ENCODE measurements at regions of chr14 and their contacts with region 1.

Region 1: GRCh38 chr14:51860164-51860824 is at the start of gene GNG2:
- DNase-seq: peak; percentile 83 to 92 (median 87)
- H3K4me3 ChIP-seq: peak within 1 kb of the TSS; percentile 49 to 77
- H3K4me3 Mint-ChIP-seq: peak within 1 kb of the TSS; percentile 91 to 98 (median 96)
- H3K27ac ChIP-seq: peak within 1 kb of the TSS; percentile 84
- H3K27ac Mint-ChIP-seq: peak within 1 kb of the TSS; percentile 96 to 100 (median 99)
- H3K4me1 ChIP-seq: peaks cover 57% of the 10 kb centered on the region
- H3K4me1 Mint-ChIP-seq: peaks cover 47 to 84% (median 63%) of the 10 kb centered on the region in 4 donors
- H3K27me3 ChIP-seq: no peaks in the 10 kb centered on the region
- H3K27me3 Mint-ChIP-seq: no peaks in the 10 kb centered on the region
- total RNA-seq, gene GNG2: 81.3 to 84.8 TPM

Region 2: GRCh38 chr14:50311975-50312733 is 1548.1 kb before region 1 on chr14 and contains the starts of genes DMAC2L and L2HGDH:
- CTCF ChIA-PET with region 1: no interaction called
- POLR2A ChIA-PET with region 1: no interaction called
- intact Hi-C with region 1: loop called (anchors 5 kb)
- DNase-seq: peak; percentile 86 to 91 (median 89)
- H3K4me3 ChIP-seq: peak within 1 kb of the TSS; percentile 77 to 92
- H3K4me3 Mint-ChIP-seq: peak within 1 kb of the TSS; percentile 91 to 98 (median 97)
- H3K27ac ChIP-seq: peak within 1 kb of the TSS; percentile 76
- H3K27ac Mint-ChIP-seq: peak within 1 kb of the TSS; percentile 92 to 99 (median 99)
- H3K4me1 ChIP-seq: peaks cover 30% of the 10 kb centered on the region
- H3K4me1 Mint-ChIP-seq: peaks cover 30 to 47% (median 34%) of the 10 kb centered on the region in 4 donors
- H3K27me3 ChIP-seq: no peaks in the 10 kb centered on the region
- H3K27me3 Mint-ChIP-seq: no peaks in the 10 kb centered on the region
- total RNA-seq, gene DMAC2L: 15.9 to 19.5 TPM
- total RNA-seq, gene L2HGDH: 4.9 to 5.5 TPM

Region 3: GRCh38 chr14:51759950-51760349 is 100.3 kb before region 1 on chr14:
- CTCF ChIA-PET with region 1: no interaction called
- POLR2A ChIA-PET with region 1: no interaction called
- intact Hi-C with region 1: no loop called
- DNase-seq: no peak
- H3K4me3 ChIP-seq: no peak overlapping the region
- H3K4me3 Mint-ChIP-seq: no peak overlapping the region
- H3K27ac ChIP-seq: no peak overlapping the region
- H3K27ac Mint-ChIP-seq: no peak overlapping the region
- H3K4me1 ChIP-seq: no peaks in the 10 kb centered on the region
- H3K4me1 Mint-ChIP-seq: peaks cover 5 to 7% (median 6%) of the 10 kb centered on the region in 4 donors
- H3K27me3 ChIP-seq: no peaks in the 10 kb centered on the region
- H3K27me3 Mint-ChIP-seq: peaks cover 4 to 13% of the 10 kb centered on the region in 2 donors

Region 4: DNA sequence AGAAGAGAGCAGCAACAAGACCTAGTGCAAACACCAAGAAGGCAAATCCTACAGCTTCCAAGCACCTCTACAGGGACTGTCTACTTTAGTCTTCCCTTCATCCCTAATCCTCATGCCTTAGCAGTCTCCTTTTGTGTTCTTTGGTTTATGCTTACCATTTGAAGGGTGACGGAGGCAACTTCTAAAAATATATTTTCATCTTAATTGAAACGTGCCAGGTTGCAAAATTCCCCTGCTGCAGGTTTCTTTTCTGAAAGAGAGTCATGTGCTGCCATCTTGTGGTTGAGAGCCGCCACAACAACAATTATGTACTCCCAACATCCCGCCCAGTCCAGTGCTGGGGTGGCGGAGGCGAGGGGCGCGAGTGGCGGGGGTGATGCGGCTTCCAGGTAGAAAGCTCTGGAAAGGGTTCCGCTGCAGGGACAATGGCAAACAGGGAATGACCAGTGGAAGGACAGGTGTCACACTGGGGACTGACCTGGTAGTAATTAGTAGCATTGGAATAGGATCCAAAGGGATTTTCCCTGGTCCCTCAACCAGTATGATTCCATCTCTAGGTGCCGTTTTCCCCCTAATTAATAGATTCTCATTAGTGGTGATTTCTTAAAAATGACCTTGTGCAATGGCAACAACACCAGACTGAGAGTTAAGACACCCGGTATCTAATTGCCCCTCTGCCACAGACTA is 80.1 kb before region 1 on chr14:
- CTCF ChIA-PET with region 1: interaction called, 7 read pairs
- POLR2A ChIA-PET with region 1: no interaction called
- intact Hi-C with region 1: loop called (anchors 5 kb)
- DNase-seq: peak; percentile 64 to 70 (median 69)
- H3K4me3 ChIP-seq: no peak overlapping the region
- H3K4me3 Mint-ChIP-seq: peak overlapping the region in 1 of 8 donors; percentile 71
- H3K27ac ChIP-seq: no peak overlapping the region
- H3K27ac Mint-ChIP-seq: peak overlapping the region in 2 of 7 donors; percentile 2 to 75
- H3K4me1 ChIP-seq: peaks cover 8% of the 10 kb centered on the region
- H3K4me1 Mint-ChIP-seq: peaks cover 12 to 16% (median 13%) of the 10 kb centered on the region in 4 donors
- H3K27me3 ChIP-seq: no peaks in the 10 kb centered on the region
- H3K27me3 Mint-ChIP-seq: peaks cover 18 to 21% of the 10 kb centered on the region in 2 donors

Region 5: GRCh38 chr14:51846631-51847488 is 13.4 kb before region 1 on chr14:
- CTCF ChIA-PET with region 1: interaction called, 25 read pairs
- POLR2A ChIA-PET with region 1: interaction called, 285 read pairs
- intact Hi-C with region 1: loop called (anchors 1 kb)
- DNase-seq: peak; percentile 92 to 99 (median 96)
- H3K4me3 ChIP-seq: peak overlapping the region; percentile 14 to 72
- H3K4me3 Mint-ChIP-seq: peak overlapping the region; percentile 85 to 98 (median 91)
- H3K27ac ChIP-seq: peak overlapping the region; percentile 92
- H3K27ac Mint-ChIP-seq: peak overlapping the region; percentile 98 to 100 (median 99)
- H3K4me1 ChIP-seq: peaks cover 51% of the 10 kb centered on the region
- H3K4me1 Mint-ChIP-seq: peaks cover 46 to 73% (median 52%) of the 10 kb centered on the region in 4 donors
- H3K27me3 ChIP-seq: no peaks in the 10 kb centered on the region
- H3K27me3 Mint-ChIP-seq: peaks cover 2% of the 10 kb centered on the region in 2 donors

Region 6: GRCh38 chr14:51879170-51879569 is 18.9 kb after region 1 on chr14:
- CTCF ChIA-PET with region 1: interaction called, 4 read pairs
- POLR2A ChIA-PET with region 1: interaction called, 53 read pairs
- intact Hi-C with region 1: loop called (anchors 2 kb)
- DNase-seq: no peak
- H3K4me3 ChIP-seq: no peak overlapping the region
- H3K4me3 Mint-ChIP-seq: peak overlapping the region in 2 of 8 donors; percentile 1 to 22
- H3K27ac ChIP-seq: no peak overlapping the region
- H3K27ac Mint-ChIP-seq: peak overlapping the region; percentile 2 to 80 (median 54)
- H3K4me1 ChIP-seq: peaks cover 89% of the 10 kb centered on the region
- H3K4me1 Mint-ChIP-seq: peaks cover 54 to 82% (median 70%) of the 10 kb centered on the region in 4 donors
- H3K27me3 ChIP-seq: no peaks in the 10 kb centered on the region
- H3K27me3 Mint-ChIP-seq: no peaks in the 10 kb centered on the region

Region 7: DNA sequence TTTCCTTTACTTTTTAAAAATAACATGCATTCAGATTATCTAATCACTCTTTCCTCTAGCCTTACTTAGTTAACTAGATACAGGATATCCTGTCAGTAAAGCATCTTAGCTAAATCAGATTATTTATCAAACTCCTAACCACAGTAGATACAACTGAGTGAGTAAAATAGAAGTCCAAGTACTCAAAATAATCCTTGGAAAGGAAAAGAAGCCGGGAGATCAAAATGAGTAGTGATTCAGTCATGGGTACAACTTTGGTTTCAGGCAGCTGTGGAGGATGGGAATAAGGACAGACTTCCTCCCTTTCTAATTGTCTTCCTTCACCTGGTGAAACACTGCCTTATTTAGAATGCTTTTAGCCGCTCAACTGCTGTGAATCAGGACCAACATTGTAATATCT is 29.6 kb after region 1 on chr14:
- CTCF ChIA-PET with region 1: interaction called, 7 read pairs
- POLR2A ChIA-PET with region 1: interaction called, 53 read pairs
- intact Hi-C with region 1: no loop called
- DNase-seq: no peak
- H3K4me3 ChIP-seq: no peak overlapping the region
- H3K4me3 Mint-ChIP-seq: peak overlapping the region in 7 of 8 donors; percentile 22 to 80 (median 65)
- H3K27ac ChIP-seq: peak overlapping the region; percentile 18
- H3K27ac Mint-ChIP-seq: peak overlapping the region; percentile 13 to 91 (median 71)
- H3K4me1 ChIP-seq: peaks cover 87% of the 10 kb centered on the region
- H3K4me1 Mint-ChIP-seq: peaks cover 48 to 93% (median 72%) of the 10 kb centered on the region in 4 donors
- H3K27me3 ChIP-seq: no peaks in the 10 kb centered on the region
- H3K27me3 Mint-ChIP-seq: no peaks in the 10 kb centered on the region

Region 8: DNA sequence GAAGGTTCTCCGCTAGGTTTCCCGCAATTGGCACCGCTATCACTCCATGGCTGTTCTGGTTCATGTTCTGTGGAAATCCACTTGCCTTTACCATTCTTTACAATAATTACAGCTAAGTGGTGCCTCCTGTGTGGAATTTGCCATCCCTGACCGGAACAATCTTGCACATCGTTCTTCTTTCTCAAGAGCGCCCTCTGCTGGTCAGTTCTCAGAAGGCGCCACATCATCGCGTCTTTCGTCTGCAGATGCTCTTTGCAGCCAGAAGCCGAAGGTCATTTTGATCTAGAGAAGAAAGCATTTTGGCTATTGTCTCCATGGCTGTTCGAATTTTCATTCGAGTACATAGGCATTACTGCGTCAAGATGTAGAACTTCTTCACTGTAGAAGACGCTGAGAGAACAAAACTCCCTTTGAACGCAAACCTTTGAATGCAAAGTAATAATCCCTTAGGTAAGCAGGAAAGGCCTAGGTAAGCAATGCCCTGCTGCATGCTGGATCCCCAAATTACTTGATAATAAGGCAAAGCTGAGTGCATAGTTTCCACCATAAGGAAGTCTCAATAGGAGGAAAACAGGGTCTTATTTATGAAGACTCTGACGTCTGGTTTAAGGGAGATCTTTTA is 118.9 kb after region 1 on chr14:
- CTCF ChIA-PET with region 1: interaction called, 40 read pairs
- POLR2A ChIA-PET with region 1: interaction called, 8 read pairs
- intact Hi-C with region 1: loop called (anchors 1 kb)
- DNase-seq: peak; percentile 71 to 76 (median 73)
- H3K4me3 ChIP-seq: no peak overlapping the region
- H3K4me3 Mint-ChIP-seq: peak overlapping the region in 1 of 8 donors; percentile 34
- H3K27ac ChIP-seq: no peak overlapping the region
- H3K27ac Mint-ChIP-seq: peak overlapping the region in 2 of 7 donors; percentile 47 to 48
- H3K4me1 ChIP-seq: peaks cover 7% of the 10 kb centered on the region
- H3K4me1 Mint-ChIP-seq: peaks cover 0 to 6% (median 5%) of the 10 kb centered on the region in 4 donors
- H3K27me3 ChIP-seq: no peaks in the 10 kb centered on the region
- H3K27me3 Mint-ChIP-seq: no peaks in the 10 kb centered on the region